ENCODE measurements at regions of chr7 and their contacts with region 1.

Region 1: GRCh38 chr7:33109005-33109757 is at the start of gene RP9:
- DNase-seq: peak; percentile 60 to 88 (median 74)
- ATAC-seq: peak; percentile 28 to 93 (median 80)
- H3K4me3 ChIP-seq: peak within 1 kb of the TSS; percentile 70 to 97 (median 94)
- H3K27ac ChIP-seq: peak within 1 kb of the TSS; percentile 16 to 91 (median 85)
- H3K4me1 ChIP-seq: peaks cover 16 to 47% (median 33%) of the 10 kb centered on the region in 12 donors
- H3K27me3 ChIP-seq: no peaks in the 10 kb centered on the region
- CTCF ChIP-seq: peak; percentile 21 to 87 (median 62)
- POLR2A ChIP-seq: peak in 1 of 2 donors; percentile 6
- total RNA-seq, gene RP9: 12.4 to 25.9 (median 18.0) TPM

Region 2: GRCh38 chr7:32761451-32762205 is 347.6 kb before region 1 on chr7:
- intact Hi-C with region 1: loop called in 3 of 10 experiments (anchors 10 kb)
- DNase-seq: peak in 1 of 5 donors; percentile 62
- ATAC-seq: peak in 3 of 4 donors; percentile 22 to 56 (median 31)
- H3K4me3 ChIP-seq: no peak overlapping the region
- H3K27ac ChIP-seq: peak overlapping the region in 10 of 12 donors; percentile 25 to 82 (median 60)
- H3K4me1 ChIP-seq: peaks cover 0 to 14% (median 0%) of the 10 kb centered on the region in 12 donors
- H3K27me3 ChIP-seq: peaks cover 0 to 17% (median 0%) of the 10 kb centered on the region in 9 donors
- CTCF ChIP-seq: no peak
- POLR2A ChIP-seq: no peak

Region 3: DNA sequence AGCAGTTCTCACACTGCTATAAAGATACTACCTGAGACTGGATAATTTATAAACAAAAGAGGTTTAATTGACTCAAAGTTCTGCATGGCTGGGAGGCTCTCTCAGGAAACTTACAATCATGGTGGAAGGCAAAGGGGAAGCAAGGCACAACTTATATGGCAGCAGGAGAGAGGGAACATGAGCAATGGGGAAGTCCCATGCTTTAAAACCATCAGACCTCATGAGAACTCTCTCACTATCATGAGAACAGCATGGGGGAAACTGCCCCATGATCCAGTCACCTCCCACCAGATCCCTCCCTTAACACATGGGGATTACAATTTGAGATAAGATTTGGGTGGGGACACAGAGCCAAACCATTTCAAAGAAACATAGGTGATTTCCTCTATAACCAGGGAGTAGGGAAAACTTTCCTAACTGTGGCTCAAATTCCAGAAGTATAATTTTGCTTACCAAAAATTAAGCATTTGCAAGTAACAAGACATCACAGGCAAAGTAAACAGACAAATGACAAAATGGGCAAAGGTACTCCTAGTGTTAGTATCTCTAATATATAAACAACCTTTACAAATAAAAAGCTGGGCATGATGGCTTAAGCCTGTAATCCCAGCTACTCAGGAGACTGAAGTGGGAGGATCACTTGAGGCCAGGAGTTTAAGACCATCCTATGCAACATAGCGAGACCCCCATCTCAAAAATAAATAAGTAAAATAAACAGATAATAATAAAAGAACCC is 305.6 kb before region 1 on chr7:
- intact Hi-C with region 1: loop called in 4 of 10 experiments (anchors 2 to 10 kb)
- DNase-seq: no peak
- ATAC-seq: no peak
- H3K4me3 ChIP-seq: no peak overlapping the region
- H3K27ac ChIP-seq: no peak overlapping the region
- H3K4me1 ChIP-seq: peaks cover 0 to 5% (median 0%) of the 10 kb centered on the region in 12 donors
- H3K27me3 ChIP-seq: no peaks in the 10 kb centered on the region
- CTCF ChIP-seq: no peak
- POLR2A ChIP-seq: no peak

Region 4: DNA sequence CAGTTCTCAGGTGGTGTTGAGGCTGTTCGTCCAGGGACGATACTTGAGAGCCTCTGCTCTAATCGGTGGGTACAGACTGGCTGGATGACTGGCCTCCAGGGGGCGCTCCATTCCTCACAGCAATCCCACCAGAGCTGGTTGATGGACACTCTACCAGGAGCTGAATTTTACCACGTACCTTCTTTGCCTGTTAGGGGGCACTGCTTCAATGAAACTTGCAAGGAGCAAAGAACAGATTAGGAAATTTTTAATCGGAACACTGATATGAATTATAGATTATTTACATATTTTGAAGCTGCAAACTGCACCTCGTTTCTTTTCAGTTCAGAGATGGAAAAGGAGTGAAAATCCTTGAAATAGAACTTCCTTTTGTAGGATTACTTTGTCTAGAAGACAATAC is 262.5 kb before region 1 on chr7:
- intact Hi-C with region 1: loop called in 2 of 10 experiments (anchors 2 to 10 kb)
- DNase-seq: peak; percentile 79 to 93 (median 90)
- ATAC-seq: peak; percentile 90 to 100 (median 100)
- H3K4me3 ChIP-seq: peak overlapping the region in 2 of 12 donors; percentile 6 to 25
- H3K27ac ChIP-seq: no peak overlapping the region
- H3K4me1 ChIP-seq: peaks cover 0 to 8% (median 3%) of the 10 kb centered on the region in 12 donors
- H3K27me3 ChIP-seq: no peaks in the 10 kb centered on the region
- CTCF ChIP-seq: peak; percentile 73 to 98 (median 94)
- POLR2A ChIP-seq: no peak

Region 5: DNA sequence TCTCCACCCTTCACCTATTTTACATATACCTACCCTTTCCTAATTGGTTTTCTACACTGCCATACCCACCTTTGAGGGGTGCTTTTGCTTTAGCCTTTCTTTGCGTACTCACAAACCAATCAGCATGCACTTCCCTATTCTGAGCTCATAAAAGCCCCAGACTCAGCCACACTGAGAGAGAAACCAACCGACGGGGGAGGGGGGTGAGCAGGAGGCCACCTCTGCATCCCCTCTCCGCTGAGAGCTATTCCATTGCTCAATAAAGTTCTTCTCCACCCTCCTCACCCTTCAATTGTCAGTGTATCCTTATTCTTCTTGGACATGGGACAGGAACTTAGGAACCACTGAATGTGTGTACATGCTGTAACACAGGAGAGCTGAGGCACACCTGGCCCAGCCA is 161.0 kb before region 1 on chr7:
- intact Hi-C with region 1: loop called in 2 of 10 experiments (anchors 5 kb)
- DNase-seq: no peak
- ATAC-seq: no peak
- H3K4me3 ChIP-seq: no peak overlapping the region
- H3K27ac ChIP-seq: no peak overlapping the region
- H3K4me1 ChIP-seq: peaks cover 0 to 5% (median under 1%) of the 10 kb centered on the region in 12 donors
- H3K27me3 ChIP-seq: no peaks in the 10 kb centered on the region
- CTCF ChIP-seq: no peak
- POLR2A ChIP-seq: no peak

Region 6: GRCh38 chr7:32957326-32958045 is 151.7 kb before region 1 on chr7 and contains the start of gene FKBP9:
- intact Hi-C with region 1: loop called in 1 of 10 experiments (anchors 5 kb)
- DNase-seq: peak; percentile 85 to 96 (median 90)
- ATAC-seq: peak; percentile 85 to 97 (median 94)
- H3K4me3 ChIP-seq: peak within 1 kb of the TSS; percentile 79 to 100 (median 92)
- H3K27ac ChIP-seq: peak within 1 kb of the TSS; percentile 89 to 100 (median 98)
- H3K4me1 ChIP-seq: peaks cover 0 to 32% (median 13%) of the 10 kb centered on the region in 12 donors
- H3K27me3 ChIP-seq: no peaks in the 10 kb centered on the region
- CTCF ChIP-seq: peak in 1 of 12 donors; percentile 6
- POLR2A ChIP-seq: peak in 1 of 2 donors; percentile 85
- total RNA-seq, gene FKBP9: 91.1 to 146 (median 130) TPM

Region 7: GRCh38 chr7:33062782-33063443 is 46.3 kb before region 1 on chr7:
- intact Hi-C with region 1: loop called in 4 of 10 experiments (anchors 5 kb)
- DNase-seq: peak; percentile 94 to 97 (median 94)
- ATAC-seq: peak; percentile 98 to 100 (median 99)
- H3K4me3 ChIP-seq: peak overlapping the region; percentile 68 to 95 (median 86)
- H3K27ac ChIP-seq: peak overlapping the region; percentile 91 to 98 (median 96)
- H3K4me1 ChIP-seq: peaks cover 3 to 41% (median 20%) of the 10 kb centered on the region in 12 donors
- H3K27me3 ChIP-seq: no peaks in the 10 kb centered on the region
- CTCF ChIP-seq: no peak
- POLR2A ChIP-seq: peak in 1 of 2 donors; percentile 83

Measured in heart left ventricle (tissue), 16 donors.